ENCODE measurements at regions of chr17 and their contacts with region 1.

Region 1: DNA sequence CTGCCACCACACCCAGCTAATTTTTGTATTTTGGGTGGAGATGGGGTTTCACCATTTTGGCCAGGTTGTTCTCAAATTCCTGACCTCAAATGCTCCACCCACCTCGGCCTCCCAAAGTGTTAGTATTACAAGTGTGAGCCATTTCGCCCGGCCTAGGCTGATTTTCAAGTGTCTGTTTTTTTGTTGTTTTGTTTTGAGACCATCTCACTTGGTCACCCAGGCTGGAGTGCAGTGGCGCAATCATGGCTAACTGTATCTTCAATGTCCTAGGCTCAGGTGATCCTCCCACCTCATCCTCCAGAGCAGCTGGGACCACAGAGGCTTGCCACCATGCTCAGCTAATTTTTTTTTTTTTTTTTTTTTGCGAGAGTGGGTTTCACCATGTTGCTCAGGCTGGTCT is 4.1 kb downstream of the NEK8 start:
- DNase-seq: no peak
- ATAC-seq: no peak
- H3K4me3 ChIP-seq: no peak overlapping the region
- H3K4me3 Mint-ChIP-seq: no peak overlapping the region
- H3K27ac ChIP-seq: no peak overlapping the region
- H3K27ac Mint-ChIP-seq: no peak overlapping the region
- H3K4me1 ChIP-seq: peaks cover 5 to 17% of the 10 kb centered on the region in 2 experiments
- H3K4me1 Mint-ChIP-seq: peaks cover 13 to 19% (median 15%) of the 10 kb centered on the region in 3 donors
- H3K27me3 ChIP-seq: no peaks in the 10 kb centered on the region
- H3K27me3 Mint-ChIP-seq: no peaks in the 10 kb centered on the region

Region 2: GRCh38 chr17:28704219-28704858 is 28.4 kb before region 1 on chr17:
- CTCF ChIA-PET with region 1: no interaction called
- POLR2A ChIA-PET with region 1: no interaction called
- DNase-seq: no peak
- ATAC-seq: no peak
- H3K4me3 ChIP-seq: no peak overlapping the region
- H3K4me3 Mint-ChIP-seq: no peak overlapping the region
- H3K27ac ChIP-seq: no peak overlapping the region
- H3K27ac Mint-ChIP-seq: no peak overlapping the region
- H3K4me1 ChIP-seq: no peaks in the 10 kb centered on the region
- H3K4me1 Mint-ChIP-seq: peaks cover 0 to 4% (median 0%) of the 10 kb centered on the region in 3 donors
- H3K27me3 ChIP-seq: no peaks in the 10 kb centered on the region
- H3K27me3 Mint-ChIP-seq: no peaks in the 10 kb centered on the region

Region 3: GRCh38 chr17:28744972-28745785 is 12.5 kb after region 1 on chr17:
- CTCF ChIA-PET with region 1: interaction called, 35 to 197 read pairs
- POLR2A ChIA-PET with region 1: interaction called, 3 to 10 read pairs
- DNase-seq: peak in 7 of 35 experiments; percentile 11 to 55 (median 28)
- ATAC-seq: peak in 3 of 4 experiments; percentile 7 to 18 (median 17)
- H3K4me3 ChIP-seq: peak overlapping the region; percentile 76 to 89
- H3K4me3 Mint-ChIP-seq: peak overlapping the region; percentile 80 to 87 (median 82)
- H3K27ac ChIP-seq: peak overlapping the region; percentile 86
- H3K27ac Mint-ChIP-seq: peak overlapping the region; percentile 76 to 82
- H3K4me1 ChIP-seq: peaks cover 20 to 55% of the 10 kb centered on the region in 2 experiments
- H3K4me1 Mint-ChIP-seq: peaks cover 5 to 40% (median 20%) of the 10 kb centered on the region in 3 donors
- H3K27me3 ChIP-seq: no peaks in the 10 kb centered on the region
- H3K27me3 Mint-ChIP-seq: no peaks in the 10 kb centered on the region